Dorsolateral prefrontal cortex (tissue), 120 donors: ENCODE measurements at regions of chr11 and their contacts with region 1.

Region 1: DNA sequence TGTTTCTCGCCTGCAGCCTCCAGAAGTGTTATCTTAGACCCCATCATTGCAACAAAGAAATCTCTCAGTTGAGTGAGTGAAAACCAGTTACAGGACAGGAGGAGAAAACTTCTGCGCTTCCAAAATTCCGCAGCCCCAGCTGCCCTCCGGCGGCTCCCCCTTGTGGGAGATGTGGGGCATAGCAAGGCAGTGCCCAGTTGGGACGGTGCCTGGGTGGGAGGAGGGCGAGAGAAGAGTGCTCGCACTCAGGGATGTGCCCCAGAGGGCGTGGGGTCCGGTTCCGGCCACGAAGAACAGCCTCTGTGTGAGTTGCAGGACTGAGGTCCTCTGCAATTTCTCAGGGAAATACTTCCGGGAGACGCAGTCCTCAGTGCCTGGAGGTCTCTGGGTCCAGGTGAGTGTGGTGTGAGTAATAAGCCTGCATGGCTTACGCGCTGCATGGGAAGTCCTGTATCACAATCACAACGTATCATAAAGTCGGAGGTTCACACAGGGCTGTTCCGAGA is 87.0 kb upstream of the BLID start:
- DNase-seq: peak; percentile 26 to 83 (median 65)
- H3K4me3 ChIP-seq: peak overlapping the region; percentile 29 to 82 (median 61)
- H3K27ac ChIP-seq: peak overlapping the region in 58 of 59 donors; percentile 34 to 99 (median 88)
- H3K27me3 ChIP-seq: no peaks in the 10 kb centered on the region
- CTCF ChIP-seq: peak; percentile 87 to 100 (median 98)

Region 2: GRCh38 chr11:121810291-121810690 is 392.7 kb before region 1 on chr11:
- intact Hi-C with region 1: no loop called
- DNase-seq: no peak
- H3K4me3 ChIP-seq: no peak overlapping the region
- H3K27ac ChIP-seq: peak overlapping the region in 1 of 59 donors; percentile 12
- H3K27me3 ChIP-seq: no peaks in the 10 kb centered on the region
- CTCF ChIP-seq: no peak

Region 3: GRCh38 chr11:122108192-122108799 is 94.7 kb before region 1 on chr11:
- intact Hi-C with region 1: loop called (anchors 2 kb)
- DNase-seq: peak in 1 of 10 donors; percentile 65
- H3K4me3 ChIP-seq: no peak overlapping the region
- H3K27ac ChIP-seq: peak overlapping the region in 11 of 59 donors; percentile 2 to 47 (median 22)
- H3K27me3 ChIP-seq: no peaks in the 10 kb centered on the region
- CTCF ChIP-seq: peak; percentile 44 to 89 (median 76)